ENCODE measurements at regions of chr16 and their contacts with region 1.

Region 1: DNA sequence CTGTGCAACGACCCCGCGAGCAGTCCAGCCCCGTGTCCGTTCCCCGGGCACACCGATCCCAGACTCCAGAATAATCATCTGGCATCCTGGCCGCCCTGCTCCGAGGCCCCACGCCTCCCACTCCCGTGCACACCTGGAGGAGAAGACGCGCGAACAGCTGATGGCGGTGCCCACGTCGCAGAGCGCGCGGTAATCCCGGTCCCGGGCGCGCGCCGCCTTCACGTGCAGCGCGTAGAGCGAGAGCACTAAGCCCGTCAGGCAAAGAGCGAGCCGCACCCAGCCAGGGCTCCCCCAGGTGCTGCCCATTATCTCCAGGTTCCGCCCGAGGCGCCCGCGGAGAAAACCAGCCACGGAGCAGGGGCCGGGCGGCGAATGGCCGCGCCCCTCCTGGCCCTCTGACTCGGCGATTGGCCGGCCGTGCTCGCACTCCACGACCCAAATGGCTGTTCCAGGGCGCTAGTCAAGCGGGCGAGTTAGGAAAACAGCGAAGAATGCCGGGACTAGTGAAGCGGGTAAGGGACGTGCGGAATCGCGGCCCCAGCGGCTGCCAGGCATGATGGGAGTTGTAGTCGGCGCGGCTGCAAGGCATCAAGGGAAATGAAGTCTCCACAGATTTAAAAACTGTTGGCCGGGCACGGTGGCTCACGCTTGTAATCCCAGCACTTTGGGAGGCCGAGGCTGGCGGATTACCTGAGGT is at the start of gene VKORC1:
- DNase-seq: peak; percentile 65 to 93 (median 85)
- ATAC-seq: peak; percentile 86
- H3K4me3 ChIP-seq: peak within 1 kb of the TSS; percentile 72 to 91
- H3K4me3 Mint-ChIP-seq: peak within 1 kb of the TSS; percentile 93
- H3K27ac ChIP-seq: peak within 1 kb of the TSS; percentile 69 to 74
- H3K27ac Mint-ChIP-seq: peak within 1 kb of the TSS; percentile 91
- H3K4me1 ChIP-seq: peaks cover 19% of the 10 kb centered on the region
- H3K4me1 Mint-ChIP-seq: peaks cover 25% of the 10 kb centered on the region
- H3K27me3 ChIP-seq: no peaks in the 10 kb centered on the region
- H3K27me3 Mint-ChIP-seq: no peaks in the 10 kb centered on the region
- CTCF ChIP-seq: no peak
- total RNA-seq, gene VKORC1: 23.0 to 27.2 TPM

Region 2: DNA sequence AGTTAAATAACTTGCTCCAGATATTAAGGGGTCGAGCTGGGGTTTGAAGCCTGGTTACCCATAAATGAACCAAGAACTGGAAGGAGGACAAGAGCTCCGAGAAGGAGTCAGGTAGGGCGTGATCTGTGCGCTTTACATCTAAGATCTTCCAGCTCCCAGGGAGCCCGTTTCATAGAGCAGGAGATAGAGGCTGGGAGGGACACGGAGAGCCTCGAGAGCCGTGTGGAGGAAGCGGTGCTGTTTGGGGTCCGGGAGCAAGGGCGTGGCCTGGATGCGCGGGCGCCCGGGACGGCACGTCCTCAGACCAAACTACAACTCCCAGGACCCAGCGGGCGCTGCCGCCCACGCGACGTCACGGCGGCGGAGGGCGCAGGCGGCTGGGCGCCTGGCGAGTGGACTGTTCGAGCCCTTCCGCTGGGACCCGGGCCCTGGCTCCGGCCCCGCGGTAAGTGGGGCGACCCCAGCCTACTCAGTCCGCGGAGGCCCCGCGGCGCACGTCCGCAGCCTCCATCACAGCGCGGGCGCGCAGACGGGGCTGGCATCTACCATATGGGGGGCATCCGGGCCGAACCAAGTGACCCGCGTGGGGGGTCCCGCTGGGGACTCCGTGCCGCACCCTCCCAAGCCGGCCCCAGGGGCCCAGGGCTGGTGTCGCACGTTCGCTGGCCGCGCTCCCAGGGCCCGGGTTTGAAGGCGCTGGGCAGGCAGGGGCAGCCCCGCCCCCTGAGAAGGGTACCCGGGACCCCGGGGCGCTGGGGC is 13.6 kb after region 1 on chr16 and contains the start of gene BCKDK:
- CTCF ChIA-PET with region 1: no interaction called
- POLR2A ChIA-PET with region 1: no interaction called
- intact Hi-C with region 1: loop called in 1 of 2 experiments (anchors 2 kb)
- DNase-seq: peak; percentile 9 to 76 (median 58)
- ATAC-seq: peak; percentile 67
- H3K4me3 ChIP-seq: peak within 1 kb of the TSS; percentile 50 to 96
- H3K4me3 Mint-ChIP-seq: peak within 1 kb of the TSS; percentile 87
- H3K27ac ChIP-seq: peak within 1 kb of the TSS; percentile 54 to 64
- H3K27ac Mint-ChIP-seq: peak within 1 kb of the TSS; percentile 84
- H3K4me1 ChIP-seq: peaks cover 15% of the 10 kb centered on the region
- H3K4me1 Mint-ChIP-seq: peaks cover 17% of the 10 kb centered on the region
- H3K27me3 ChIP-seq: no peaks in the 10 kb centered on the region
- H3K27me3 Mint-ChIP-seq: no peaks in the 10 kb centered on the region
- CTCF ChIP-seq: no peak
- total RNA-seq, gene BCKDK: 5.6 to 7.6 TPM

Region 3: DNA sequence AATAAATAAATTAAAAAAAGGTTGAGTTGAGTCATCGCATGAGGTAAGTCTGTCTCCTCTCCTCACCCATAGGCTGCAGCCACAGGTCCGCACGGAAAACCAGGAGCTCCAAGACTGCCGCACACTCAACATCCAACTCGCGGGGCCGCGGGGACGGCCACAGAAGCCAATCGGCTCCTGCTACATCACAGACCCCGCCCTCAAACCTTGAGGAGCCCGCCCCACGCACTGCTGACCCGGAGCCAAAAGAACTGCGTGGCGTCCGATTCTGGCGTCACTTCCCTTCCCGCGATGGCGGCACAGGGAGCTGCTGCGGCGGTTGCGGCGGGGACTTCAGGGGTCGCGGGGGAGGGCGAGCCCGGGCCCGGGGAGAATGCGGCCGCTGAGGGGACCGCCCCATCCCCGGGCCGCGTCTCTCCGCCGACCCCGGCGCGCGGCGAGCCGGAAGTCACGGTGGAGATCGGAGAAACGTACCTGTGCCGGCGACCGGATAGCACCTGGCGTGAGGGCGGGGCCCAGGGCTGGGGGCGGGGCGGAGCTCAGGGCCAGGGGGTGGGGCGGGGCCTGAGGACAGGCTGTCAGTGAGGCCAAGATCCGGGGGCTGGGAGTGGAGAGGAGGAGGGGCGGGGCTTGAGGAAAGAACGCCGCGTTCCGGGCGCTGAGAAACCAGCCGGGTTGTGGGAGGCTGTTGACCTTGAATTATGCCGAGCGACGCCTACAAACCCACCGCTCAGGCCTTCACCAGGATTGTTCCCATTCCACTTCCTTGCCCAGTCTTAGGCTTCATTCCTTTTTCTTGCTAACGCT is 23.0 kb after region 1 on chr16 and contains the start of gene KAT8:
- CTCF ChIA-PET with region 1: no interaction called
- POLR2A ChIA-PET with region 1: interaction called, 4 read pairs
- intact Hi-C with region 1: loop called (anchors 1 to 2 kb)
- DNase-seq: peak; percentile 92 to 99 (median 97)
- ATAC-seq: peak; percentile 92
- H3K4me3 ChIP-seq: peak within 1 kb of the TSS; percentile 53 to 93
- H3K4me3 Mint-ChIP-seq: peak within 1 kb of the TSS; percentile 74
- H3K27ac ChIP-seq: peak within 1 kb of the TSS; percentile 83 to 96
- H3K27ac Mint-ChIP-seq: peak within 1 kb of the TSS; percentile 95
- H3K4me1 ChIP-seq: peaks cover 11% of the 10 kb centered on the region
- H3K4me1 Mint-ChIP-seq: peaks cover 18% of the 10 kb centered on the region
- H3K27me3 ChIP-seq: no peaks in the 10 kb centered on the region
- H3K27me3 Mint-ChIP-seq: no peaks in the 10 kb centered on the region
- CTCF ChIP-seq: no peak
- total RNA-seq, gene KAT8: 105 to 107 TPM